Psoas muscle (tissue), 8 donors: ENCODE measurements at regions of chr12 and their contacts with region 1.

Region 1: DNA sequence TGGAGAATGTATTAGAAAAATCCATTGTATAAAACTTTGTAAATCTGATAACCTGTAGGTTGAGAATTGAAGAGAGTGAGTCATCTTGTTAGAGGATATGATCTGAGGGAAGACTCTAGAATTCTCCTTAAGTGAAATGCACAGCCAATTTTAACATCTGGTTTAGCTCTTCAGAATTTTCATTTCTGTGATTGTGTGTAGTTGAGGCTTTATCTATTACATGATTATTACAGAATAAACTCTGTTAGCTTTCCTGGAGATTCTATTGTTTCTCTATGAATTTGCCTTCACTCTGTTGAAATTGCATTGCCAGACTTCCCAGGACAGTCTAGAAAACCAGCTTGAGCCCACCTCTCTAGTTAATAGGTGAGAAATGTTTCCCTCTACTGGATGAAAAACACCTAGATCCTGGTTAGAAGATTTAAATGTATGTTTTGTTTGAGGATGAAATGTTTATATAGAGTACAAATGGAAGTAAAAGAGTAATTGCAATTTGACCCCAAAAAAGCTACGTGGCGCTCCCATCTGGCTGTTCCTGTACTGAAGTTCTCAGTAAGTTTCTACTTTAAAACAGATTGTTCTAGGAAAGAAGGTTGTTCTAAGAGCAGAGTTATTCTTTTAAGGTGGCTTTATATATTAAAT is 2.9 kb downstream of the NUDT4 start:
- DNase-seq: no peak
- ATAC-seq: no peak
- H3K4me3 ChIP-seq: peak overlapping the region; percentile 78
- H3K27ac ChIP-seq: peak overlapping the region; percentile 92
- H3K4me1 ChIP-seq: peaks cover 61% of the 10 kb centered on the region
- H3K27me3 ChIP-seq: no peaks in the 10 kb centered on the region
- CTCF ChIP-seq: peak; percentile 24

Region 2: GRCh38 chr12:93127582-93128331 is 252.8 kb before region 1 on chr12:
- intact Hi-C with region 1: loop called (anchors 5 to 10 kb)
- DNase-seq: peak; percentile 41 to 75
- ATAC-seq: peak; percentile 66 to 83 (median 75)
- H3K4me3 ChIP-seq: peak overlapping the region; percentile 50
- H3K27ac ChIP-seq: peak overlapping the region; percentile 94
- H3K4me1 ChIP-seq: peaks cover 45% of the 10 kb centered on the region
- H3K27me3 ChIP-seq: no peaks in the 10 kb centered on the region
- CTCF ChIP-seq: peak; percentile 32

Region 3: GRCh38 chr12:93137656-93138612 is 242.7 kb before region 1 on chr12:
- intact Hi-C with region 1: loop called in 1 of 2 experiments (anchors 10 kb)
- DNase-seq: peak in 1 of 2 donors; percentile 23
- ATAC-seq: peak; percentile 85 to 95 (median 93)
- H3K4me3 ChIP-seq: no peak overlapping the region
- H3K27ac ChIP-seq: peak overlapping the region; percentile 81
- H3K4me1 ChIP-seq: peaks cover 37% of the 10 kb centered on the region
- H3K27me3 ChIP-seq: no peaks in the 10 kb centered on the region
- CTCF ChIP-seq: no peak

Region 4: DNA sequence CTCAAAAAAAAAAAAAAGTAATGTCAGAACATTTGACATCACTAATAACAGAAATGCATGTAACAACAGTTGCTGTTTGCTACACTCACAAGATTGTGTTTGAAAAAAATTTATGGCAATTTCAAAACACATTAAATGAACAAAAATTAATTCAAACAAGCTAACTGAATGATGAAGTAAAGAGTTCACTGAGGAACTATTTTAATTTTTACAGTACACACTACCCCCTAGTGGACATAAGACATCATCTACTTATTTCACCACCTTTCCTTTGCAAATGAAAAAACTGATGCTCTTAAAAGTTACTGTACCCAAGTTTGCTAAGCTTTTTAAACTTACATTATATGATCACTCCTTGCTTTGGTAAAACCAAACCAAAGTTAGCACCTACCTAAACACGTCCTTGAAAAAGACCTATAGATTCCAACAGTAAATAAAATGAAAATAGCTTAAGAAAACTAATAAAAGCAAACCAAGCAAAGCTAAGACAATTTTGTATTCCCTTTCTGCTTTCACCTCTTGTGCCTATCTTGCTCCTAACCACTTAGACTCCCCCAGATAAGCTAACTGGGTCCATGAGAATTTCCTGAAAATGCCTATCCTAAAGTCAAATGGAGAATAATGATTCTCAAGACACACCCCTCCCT is 38.9 kb after region 1 on chr12:
- intact Hi-C with region 1: no loop called
- DNase-seq: no peak
- ATAC-seq: peak; percentile 61 to 79 (median 72)
- H3K4me3 ChIP-seq: peak overlapping the region; percentile 13
- H3K27ac ChIP-seq: peak overlapping the region; percentile 76
- H3K4me1 ChIP-seq: peaks cover 81% of the 10 kb centered on the region
- H3K27me3 ChIP-seq: no peaks in the 10 kb centered on the region
- CTCF ChIP-seq: peak; percentile 75